ENCODE measurements at regions of chr9 and their contacts with region 1.

Region 1: DNA sequence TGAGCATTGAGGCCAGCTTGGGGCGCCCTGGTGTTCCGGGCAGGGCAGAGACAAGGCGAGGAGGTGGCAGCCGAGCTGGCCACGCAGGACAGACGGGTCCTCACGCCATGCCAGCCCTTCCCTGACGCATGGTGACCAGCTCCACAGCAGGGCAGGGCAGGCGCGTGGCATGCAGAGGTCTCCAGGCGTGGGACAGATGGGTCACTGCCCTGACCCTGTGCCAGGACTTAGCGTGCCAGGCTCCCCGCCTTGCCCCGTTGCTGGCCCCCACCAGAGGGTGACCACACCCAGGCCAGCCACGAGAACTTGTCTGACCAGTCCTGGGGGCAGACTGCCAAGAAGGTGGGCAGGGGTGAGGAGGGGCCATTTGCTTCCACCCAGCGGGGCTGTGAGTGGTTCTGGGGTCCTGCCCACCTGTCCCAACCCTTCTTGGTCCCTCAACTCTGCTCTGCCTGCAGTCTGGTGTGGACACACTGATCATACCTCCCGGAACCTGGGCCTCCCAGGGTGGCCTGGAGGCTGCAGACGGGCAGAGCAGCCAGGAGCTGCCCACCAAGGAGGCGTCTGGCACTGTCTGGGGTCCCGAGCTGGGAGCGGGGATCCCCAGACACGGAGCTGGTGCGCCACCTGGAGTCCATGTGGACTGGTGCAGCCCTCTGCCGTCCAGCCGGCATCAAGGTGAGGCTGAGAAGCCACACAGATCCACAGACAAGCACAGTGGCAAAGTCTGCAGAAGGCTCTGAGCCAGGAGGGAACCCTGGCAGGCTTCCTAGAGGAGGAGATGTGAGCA is at the start of gene RNF224:
- DNase-seq: no peak
- H3K4me3 ChIP-seq: peak within 1 kb of the TSS in 1 of 2 donors; percentile 26
- H3K27ac ChIP-seq: no peak within 1 kb of the TSS
- H3K4me1 ChIP-seq: peaks cover 29% of the 10 kb centered on the region
- H3K27me3 ChIP-seq: no peaks in the 10 kb centered on the region
- CTCF ChIP-seq: peak; percentile 57 to 76 (median 60)
- POLR2A ChIP-seq: no peak
- total RNA-seq, gene RNF224: 0.74 TPM

Region 2: GRCh38 chr9:137114610-137115391 is 112.5 kb before region 1 on chr9 and contains the start of gene DPP7:
- intact Hi-C with region 1: loop called (anchors 1 kb)
- DNase-seq: no peak
- H3K4me3 ChIP-seq: peak within 1 kb of the TSS; percentile 79 to 86
- H3K27ac ChIP-seq: peak within 1 kb of the TSS; percentile 46
- H3K4me1 ChIP-seq: peaks cover 16% of the 10 kb centered on the region
- H3K27me3 ChIP-seq: no peaks in the 10 kb centered on the region
- CTCF ChIP-seq: no peak
- POLR2A ChIP-seq: peak in 1 of 2 donors; percentile 16
- total RNA-seq, gene DPP7: 152 TPM

Region 3: DNA sequence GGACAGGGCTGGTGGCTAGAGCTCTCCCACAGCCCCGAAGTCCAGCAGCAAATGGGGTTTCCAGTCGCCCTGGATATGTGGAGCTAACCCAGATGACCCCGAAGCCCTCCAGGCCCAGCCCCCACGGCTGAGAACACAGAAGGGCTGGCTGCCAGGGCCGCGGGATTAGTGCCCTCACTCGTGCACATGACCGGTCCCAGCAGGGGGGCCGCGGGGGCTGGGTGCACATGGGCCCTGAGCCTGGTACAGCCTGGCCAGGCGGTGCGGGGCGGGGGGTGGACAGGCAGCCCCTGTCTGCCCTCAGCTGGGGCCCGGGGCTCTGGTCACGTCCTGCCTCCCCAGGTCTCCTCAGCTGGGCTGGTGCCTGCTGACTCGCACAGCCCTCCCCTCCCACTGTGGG is 32.9 kb before region 1 on chr9:
- intact Hi-C with region 1: loop called (anchors 5 kb)
- DNase-seq: no peak
- H3K4me3 ChIP-seq: no peak overlapping the region
- H3K27ac ChIP-seq: no peak overlapping the region
- H3K4me1 ChIP-seq: peaks cover 72% of the 10 kb centered on the region
- H3K27me3 ChIP-seq: no peaks in the 10 kb centered on the region
- CTCF ChIP-seq: no peak
- POLR2A ChIP-seq: no peak

Region 4: DNA sequence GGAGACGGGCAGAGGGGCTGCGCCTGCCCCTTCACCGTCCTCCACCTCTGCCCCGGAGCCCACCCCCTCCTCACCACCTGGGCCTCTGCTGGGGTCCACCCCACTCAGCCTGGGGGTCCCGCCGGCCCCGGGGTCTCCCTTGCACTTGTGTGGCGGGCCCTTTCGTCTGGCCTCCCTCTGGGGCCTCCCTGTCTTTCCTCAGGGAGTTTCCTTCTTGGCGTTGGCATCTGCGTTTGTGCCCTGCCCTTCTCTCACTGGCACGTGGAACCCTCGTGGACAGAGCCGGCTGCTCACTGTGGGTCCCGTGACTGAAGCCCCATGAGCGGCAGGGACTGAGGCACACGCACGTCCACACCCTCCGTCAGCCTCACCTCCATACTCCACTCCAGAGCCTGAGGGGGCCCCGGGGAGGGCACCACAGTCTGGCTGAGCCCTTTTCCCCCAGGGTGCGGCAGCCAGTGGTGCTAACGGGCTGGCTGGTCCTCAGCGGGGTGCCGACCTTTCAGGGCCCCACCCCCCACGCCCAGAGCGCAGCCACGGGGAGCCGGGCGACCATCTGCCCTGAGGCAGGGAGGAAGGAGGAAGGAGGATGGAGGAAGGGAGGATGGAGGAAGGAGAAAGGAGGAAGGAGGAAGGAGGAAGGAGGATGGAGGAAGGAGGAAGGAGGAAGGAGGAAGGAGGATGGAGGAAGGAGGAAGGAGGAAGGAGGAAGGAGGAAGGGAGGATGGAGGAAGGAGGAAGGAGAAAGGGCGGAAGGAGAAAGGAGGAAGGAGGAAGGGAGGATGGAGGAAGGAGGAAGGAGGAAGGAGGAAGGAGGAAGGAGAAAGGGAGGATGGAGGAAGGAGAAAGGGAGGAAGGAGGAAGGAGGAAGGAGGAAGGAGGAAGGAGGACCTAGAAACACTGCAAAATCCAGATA is 127.8 kb after region 1 on chr9:
- intact Hi-C with region 1: loop called (anchors 5 kb)
- DNase-seq: no peak
- H3K4me3 ChIP-seq: no peak overlapping the region
- H3K27ac ChIP-seq: no peak overlapping the region
- H3K4me1 ChIP-seq: no peaks in the 10 kb centered on the region
- H3K27me3 ChIP-seq: no peaks in the 10 kb centered on the region
- CTCF ChIP-seq: no peak
- POLR2A ChIP-seq: no peak